ENCODE measurements at regions of chr5 and their contacts with region 1.

Region 1: GRCh38 chr5:157159209-157159751 is 6.8 kb downstream of the GARIN3 start:
- DNase-seq: no peak
- H3K27ac ChIP-seq: no peak overlapping the region
- CTCF ChIP-seq: no peak

Region 2: DNA sequence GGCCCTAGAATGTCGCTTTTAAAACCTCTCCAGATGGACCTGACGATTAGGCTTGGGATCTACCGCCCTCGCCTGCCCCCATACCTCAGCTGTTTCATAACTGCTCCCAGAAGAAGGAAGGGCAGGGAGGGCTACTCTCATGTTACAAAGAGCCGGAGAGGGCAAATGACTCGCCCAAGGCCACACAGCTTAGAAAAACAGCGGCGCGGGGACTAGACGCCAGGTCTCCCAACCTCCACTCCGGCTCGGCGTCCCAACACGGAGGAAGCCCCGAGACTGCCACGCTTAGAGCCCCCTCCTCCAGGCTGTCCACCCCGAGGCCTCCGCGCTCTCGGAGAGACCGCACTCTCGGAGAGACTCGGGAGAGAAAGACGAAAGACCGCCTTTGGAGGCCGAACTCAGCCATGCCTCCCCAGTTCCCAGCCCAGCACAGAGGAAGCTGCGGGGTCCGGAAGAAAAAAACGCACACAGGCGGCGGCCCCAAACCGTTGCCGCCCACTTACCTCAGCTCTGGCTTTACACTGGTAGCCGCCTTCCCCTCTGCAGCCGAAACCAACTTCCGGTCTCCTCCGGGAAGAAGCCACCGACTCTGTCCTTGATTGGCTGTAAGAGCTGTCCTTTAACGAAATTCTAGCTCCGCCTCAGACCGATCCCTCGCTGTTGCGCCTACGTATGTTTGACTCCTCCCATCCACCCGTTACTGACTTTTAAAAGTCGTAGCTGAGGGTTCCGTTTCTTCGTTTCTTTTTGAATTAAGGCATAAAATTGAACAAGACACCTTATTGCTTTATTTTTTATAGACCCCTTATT is 16.8 kb before region 1 on chr5 and contains the start of gene MED7:
- CTCF ChIA-PET with region 1: interaction called, 3 read pairs
- POLR2A ChIA-PET with region 1: interaction called, 21 read pairs
- DNase-seq: peak; percentile 100
- H3K27ac ChIP-seq: peak within 1 kb of the TSS; percentile 78
- CTCF ChIP-seq: no peak

Measured in RWPE1 (cell line).